Right ventricle myocardium inferior (tissue), 1 donor: ENCODE measurements at regions of chr3 and their contacts with region 1.

Region 1: GRCh38 chr3:152524198-152525140 is 255.7 kb downstream of the MBNL1 start:
- DNase-seq: no peak
- ATAC-seq: no peak

Region 2: DNA sequence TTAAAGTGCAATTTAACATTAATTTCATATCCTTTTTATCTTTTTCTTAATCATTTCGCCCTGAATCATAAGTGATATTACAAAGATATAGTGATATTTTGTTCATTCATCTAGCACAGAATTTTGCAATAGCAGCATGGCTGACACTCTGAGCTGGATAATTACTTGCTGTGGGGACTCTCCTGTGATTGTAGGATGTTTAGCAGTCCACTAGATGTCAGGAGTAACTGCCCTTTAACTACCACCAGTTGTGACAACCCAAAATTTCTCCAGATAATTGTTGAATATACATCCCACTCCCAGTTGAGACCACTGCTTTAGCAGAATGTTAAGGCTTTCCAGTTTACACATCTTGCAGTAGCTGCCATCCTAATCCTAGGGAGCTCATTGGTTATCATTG is 452.5 kb before region 1 on chr3:
- intact Hi-C with region 1: loop called (anchors 5 kb)
- DNase-seq: no peak
- ATAC-seq: no peak

Region 3: GRCh38 chr3:152477422-152477821 is 47.0 kb before region 1 on chr3:
- intact Hi-C with region 1: loop called (anchors 5 kb)
- DNase-seq: no peak
- ATAC-seq: no peak

Region 4: DNA sequence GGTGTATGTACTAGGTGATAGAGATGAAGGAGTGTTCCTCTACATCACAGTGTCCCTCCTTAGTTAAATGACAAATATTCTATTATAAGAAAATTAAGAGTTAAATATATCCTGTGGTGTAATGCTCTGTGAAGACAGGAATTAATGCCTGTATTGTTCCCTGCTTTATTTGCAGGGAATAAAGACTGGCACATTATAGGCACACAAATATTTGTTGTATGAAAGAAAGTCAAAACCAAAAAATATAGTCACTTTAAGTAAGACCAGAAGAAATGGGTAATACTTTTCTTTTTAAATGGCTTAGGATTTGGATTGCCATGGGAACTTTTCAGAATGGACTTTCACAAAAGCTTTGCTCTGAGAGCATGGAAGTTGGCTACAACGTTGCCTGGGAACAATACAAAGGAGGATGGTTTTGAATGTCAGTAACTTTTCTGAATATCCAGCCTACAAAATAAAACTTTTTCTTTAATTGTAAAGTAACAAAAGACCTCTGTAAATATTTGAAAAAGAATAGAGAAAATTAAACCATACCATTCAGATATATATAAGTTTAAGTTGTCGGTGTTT is 152.4 kb after region 1 on chr3:
- intact Hi-C with region 1: no loop called
- DNase-seq: no peak
- ATAC-seq: no peak